Activated T-helper 1 cell treated with anti-CD3 and anti-CD28 coated beads, Interleukin-12 subunit alpha, Interleukin-12 subunit beta, Interleukin-2, Interleukin-4 antibody, amounts not matched to agents 30 ng/mL and 10 ng/mL and 1 ng/mL, durations not matched to agents 14 hours and 24 hours and 36 hours (primary cell): ENCODE measurements at regions of chr4 and their contacts with region 1.

Region 1: DNA sequence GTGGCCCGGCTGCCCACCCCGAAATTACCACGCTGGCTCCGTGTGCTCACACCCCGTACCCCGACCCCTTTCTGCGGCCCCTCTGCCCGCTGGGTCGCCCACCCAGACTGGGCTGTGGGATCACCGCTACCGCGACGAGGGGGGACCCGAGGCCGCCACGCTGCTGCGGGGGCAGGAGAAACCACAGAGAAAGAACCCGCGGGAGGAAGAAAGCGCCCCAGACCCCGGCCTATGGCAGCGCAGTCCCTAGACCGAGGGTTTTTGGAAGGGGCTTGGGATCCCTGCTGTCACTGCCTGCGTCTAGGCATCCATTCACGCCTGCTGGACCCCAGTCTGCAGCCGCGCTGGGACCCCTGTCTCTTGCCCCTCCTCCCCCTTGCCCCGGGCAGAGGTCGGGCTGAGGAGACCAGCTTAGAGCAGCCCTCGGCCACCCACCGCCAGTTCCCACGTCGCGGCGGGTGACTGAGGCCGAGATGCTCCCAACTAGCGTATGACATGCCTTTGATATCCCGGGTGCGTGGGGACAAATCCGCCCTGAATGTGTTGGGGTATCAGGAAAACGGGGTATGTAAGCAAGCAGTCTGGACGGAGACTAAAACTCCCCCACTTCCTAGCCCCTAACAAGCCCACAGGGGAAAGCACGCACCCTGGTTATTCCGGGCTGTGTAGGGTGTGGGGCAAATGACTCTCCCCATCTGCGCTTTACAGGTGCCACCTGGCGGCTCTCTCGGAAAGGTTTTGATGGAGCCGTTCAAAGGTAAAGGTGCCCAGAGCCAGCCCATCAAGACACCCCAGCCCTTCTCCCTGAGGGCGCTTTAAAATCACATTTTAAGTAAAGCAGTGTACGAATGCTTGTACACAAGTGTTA is 862 bp upstream of the INPP4B start:
- DNase-seq: peak; percentile 60
- H3K4me3 Mint-ChIP-seq: peak overlapping the region; percentile 89
- H3K27ac Mint-ChIP-seq: peak overlapping the region; percentile 80
- H3K4me1 Mint-ChIP-seq: peaks cover 18% of the 10 kb centered on the region
- H3K27me3 Mint-ChIP-seq: peaks cover 22% of the 10 kb centered on the region

Region 2: GRCh38 chr4:141158219-141158618 is 1688.7 kb before region 1 on chr4:
- intact Hi-C with region 1: loop called (anchors 2 kb)
- DNase-seq: no peak
- H3K4me3 Mint-ChIP-seq: no peak overlapping the region
- H3K27ac Mint-ChIP-seq: no peak overlapping the region
- H3K4me1 Mint-ChIP-seq: no peaks in the 10 kb centered on the region
- H3K27me3 Mint-ChIP-seq: peaks cover 2% of the 10 kb centered on the region

Region 3: DNA sequence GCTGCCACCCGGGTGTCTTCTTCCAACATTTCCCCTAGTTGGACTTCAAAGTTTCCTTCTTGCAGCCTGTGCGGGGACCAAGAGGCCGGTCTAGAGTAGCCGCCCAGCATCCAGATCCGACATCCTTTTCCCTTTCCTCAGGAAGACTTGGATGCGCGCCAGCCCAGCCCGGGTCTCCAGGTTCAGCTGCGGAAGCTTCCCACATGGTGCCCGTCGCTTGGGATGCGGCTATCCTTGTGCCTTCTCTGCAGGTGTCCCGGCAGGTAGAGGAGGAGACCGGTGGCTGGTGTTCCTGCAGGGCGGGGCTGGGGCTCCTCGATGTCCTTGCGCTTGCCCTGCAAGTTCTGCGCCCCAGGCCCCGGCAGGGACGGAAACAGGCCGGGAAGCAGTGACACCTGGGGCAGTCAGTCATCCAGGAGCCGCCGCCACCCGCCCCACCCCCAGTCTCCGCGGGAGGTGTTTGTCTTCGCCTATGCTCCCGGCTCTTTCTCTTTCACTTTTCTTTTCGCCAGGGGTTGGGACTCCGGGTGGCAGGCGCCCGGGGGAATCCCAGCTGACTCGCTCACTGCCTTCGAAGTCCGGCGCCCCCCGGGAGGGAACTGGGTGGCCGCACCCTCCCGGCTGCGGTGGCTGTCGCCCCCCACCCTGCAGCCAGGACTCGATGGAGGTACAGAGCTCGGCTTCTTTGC is 1210.7 kb before region 1 on chr4 and contains the start of gene IL15:
- intact Hi-C with region 1: loop called (anchors 5 kb)
- DNase-seq: peak; percentile 70
- H3K4me3 Mint-ChIP-seq: peak within 1 kb of the TSS; percentile 96
- H3K27ac Mint-ChIP-seq: peak within 1 kb of the TSS; percentile 81
- H3K4me1 Mint-ChIP-seq: peaks cover 25% of the 10 kb centered on the region
- H3K27me3 Mint-ChIP-seq: peaks cover 20% of the 10 kb centered on the region
- total RNA-seq, gene IL15: 0.67 and 1.8 TPM in 2 replicates

Region 4: DNA sequence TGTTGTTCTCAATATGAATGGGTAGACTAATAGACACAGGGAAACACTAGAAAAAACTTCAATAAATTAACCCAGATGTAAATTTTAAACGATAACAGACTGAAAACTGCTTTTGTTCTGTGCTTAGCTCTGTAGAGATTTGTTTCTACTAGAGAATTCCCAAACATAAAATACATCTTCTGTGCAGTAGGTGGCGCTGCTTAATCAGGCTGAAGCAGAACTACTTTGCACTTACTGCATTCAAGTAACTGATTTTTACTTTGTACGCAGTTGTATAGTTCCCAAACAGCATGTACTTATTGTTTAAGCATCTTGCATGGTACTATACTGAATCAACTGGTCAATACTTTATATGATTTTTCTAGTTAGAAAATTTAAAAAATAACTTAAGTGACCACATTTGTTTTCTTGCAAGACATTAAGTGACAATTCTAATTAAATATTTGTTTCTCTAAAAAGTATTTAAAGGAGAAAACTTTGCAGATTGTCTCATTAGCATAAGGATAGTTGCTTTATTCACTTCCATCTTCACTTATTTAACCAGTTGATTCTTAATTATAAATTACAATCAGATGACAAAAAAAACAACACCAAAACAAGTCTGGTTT is 720.0 kb before region 1 on chr4:
- intact Hi-C with region 1: loop called (anchors 1 kb)
- DNase-seq: peak; percentile 27
- H3K4me3 Mint-ChIP-seq: no peak overlapping the region
- H3K27ac Mint-ChIP-seq: no peak overlapping the region
- H3K4me1 Mint-ChIP-seq: peaks cover 18% of the 10 kb centered on the region
- H3K27me3 Mint-ChIP-seq: no peaks in the 10 kb centered on the region

Region 5: GRCh38 chr4:142719854-142720541 is 127.0 kb before region 1 on chr4:
- intact Hi-C with region 1: loop called (anchors 2 kb)
- DNase-seq: no peak
- H3K4me3 Mint-ChIP-seq: no peak overlapping the region
- H3K27ac Mint-ChIP-seq: no peak overlapping the region
- H3K4me1 Mint-ChIP-seq: peaks cover 7% of the 10 kb centered on the region
- H3K27me3 Mint-ChIP-seq: no peaks in the 10 kb centered on the region

Region 6: GRCh38 chr4:143482840-143483239 is 635.9 kb after region 1 on chr4:
- intact Hi-C with region 1: loop called (anchors 10 kb)
- DNase-seq: no peak
- H3K4me3 Mint-ChIP-seq: no peak overlapping the region
- H3K27ac Mint-ChIP-seq: no peak overlapping the region
- H3K4me1 Mint-ChIP-seq: no peaks in the 10 kb centered on the region
- H3K27me3 Mint-ChIP-seq: peaks cover 4% of the 10 kb centered on the region